Activated CD8-positive, alpha-beta T cell treated with anti-CD3 and anti-CD28 coated beads, Interleukin-2, amount 10 ng/mL, durations not matched to agents 7 days and 5 days (primary cell): ENCODE measurements at regions of chr1 and their contacts with region 1.

Region 1: GRCh38 chr1:149927503-149928387 is at the start of gene SF3B4:
- DNase-seq: peak; percentile 98
- ATAC-seq: peak; percentile 97
- H3K4me3 Mint-ChIP-seq: peak within 1 kb of the TSS; percentile 96
- H3K27ac Mint-ChIP-seq: peak within 1 kb of the TSS; percentile 93
- H3K4me1 Mint-ChIP-seq: peaks cover 57% of the 10 kb centered on the region
- H3K27me3 Mint-ChIP-seq: no peaks in the 10 kb centered on the region
- total RNA-seq, gene SF3B4: 102 to 106 TPM

Region 2: DNA sequence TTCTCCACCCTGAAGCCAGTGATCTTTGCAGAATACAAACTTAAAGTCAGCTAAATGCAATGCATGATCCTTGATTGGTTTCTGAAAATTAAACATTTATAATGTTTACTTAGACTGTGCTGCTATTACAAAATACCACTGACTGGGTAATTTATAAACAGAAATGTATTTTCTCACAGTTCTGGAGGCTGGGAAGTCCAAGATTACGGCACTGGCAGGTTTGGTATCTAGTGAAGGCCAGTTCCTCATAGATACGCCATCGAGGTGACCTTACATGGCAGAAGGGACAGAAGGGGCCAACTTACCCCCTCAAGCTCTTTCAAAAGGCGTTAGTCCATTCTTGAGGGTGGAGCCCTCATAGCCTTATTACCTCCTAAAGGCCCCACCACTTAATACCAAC is 31.2 kb before region 1 on chr1:
- CTCF ChIA-PET with region 1: no interaction called
- POLR2A ChIA-PET with region 1: no interaction called
- DNase-seq: no peak
- ATAC-seq: no peak
- H3K4me3 Mint-ChIP-seq: no peak overlapping the region
- H3K27ac Mint-ChIP-seq: no peak overlapping the region
- H3K4me1 Mint-ChIP-seq: peaks cover 29% of the 10 kb centered on the region
- H3K27me3 Mint-ChIP-seq: no peaks in the 10 kb centered on the region

Region 3: GRCh38 chr1:149942207-149942606 is 14.5 kb after region 1 on chr1:
- CTCF ChIA-PET with region 1: interaction called, 4 read pairs
- POLR2A ChIA-PET with region 1: interaction called, 23 read pairs
- DNase-seq: no peak
- ATAC-seq: no peak
- H3K4me3 Mint-ChIP-seq: no peak overlapping the region
- H3K27ac Mint-ChIP-seq: no peak overlapping the region
- H3K4me1 Mint-ChIP-seq: peaks cover 38% of the 10 kb centered on the region
- H3K27me3 Mint-ChIP-seq: no peaks in the 10 kb centered on the region

Region 4: DNA sequence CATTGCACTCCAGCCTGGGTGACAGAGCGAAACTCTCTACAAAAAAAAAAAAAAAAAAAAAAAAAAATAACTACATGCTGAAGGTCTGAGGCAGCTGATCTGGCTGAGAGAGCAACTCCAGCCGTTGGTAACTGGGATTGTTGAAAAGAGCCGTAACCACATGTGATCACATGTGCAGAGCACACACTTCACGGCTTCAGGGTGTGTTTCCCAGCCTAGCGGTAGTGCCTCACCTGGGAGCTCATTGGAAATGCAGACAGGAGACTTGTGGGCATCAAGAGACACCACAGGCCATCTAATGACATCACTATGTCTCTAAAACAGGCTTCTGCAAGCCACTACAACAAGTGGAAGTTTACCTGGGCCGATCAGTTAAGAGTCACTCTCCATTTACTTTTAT is 94.6 kb after region 1 on chr1:
- CTCF ChIA-PET with region 1: no interaction called
- POLR2A ChIA-PET with region 1: no interaction called
- DNase-seq: no peak
- ATAC-seq: no peak
- H3K4me3 Mint-ChIP-seq: no peak overlapping the region
- H3K27ac Mint-ChIP-seq: no peak overlapping the region
- H3K4me1 Mint-ChIP-seq: no peaks in the 10 kb centered on the region
- H3K27me3 Mint-ChIP-seq: peaks cover 15% of the 10 kb centered on the region

Region 5: DNA sequence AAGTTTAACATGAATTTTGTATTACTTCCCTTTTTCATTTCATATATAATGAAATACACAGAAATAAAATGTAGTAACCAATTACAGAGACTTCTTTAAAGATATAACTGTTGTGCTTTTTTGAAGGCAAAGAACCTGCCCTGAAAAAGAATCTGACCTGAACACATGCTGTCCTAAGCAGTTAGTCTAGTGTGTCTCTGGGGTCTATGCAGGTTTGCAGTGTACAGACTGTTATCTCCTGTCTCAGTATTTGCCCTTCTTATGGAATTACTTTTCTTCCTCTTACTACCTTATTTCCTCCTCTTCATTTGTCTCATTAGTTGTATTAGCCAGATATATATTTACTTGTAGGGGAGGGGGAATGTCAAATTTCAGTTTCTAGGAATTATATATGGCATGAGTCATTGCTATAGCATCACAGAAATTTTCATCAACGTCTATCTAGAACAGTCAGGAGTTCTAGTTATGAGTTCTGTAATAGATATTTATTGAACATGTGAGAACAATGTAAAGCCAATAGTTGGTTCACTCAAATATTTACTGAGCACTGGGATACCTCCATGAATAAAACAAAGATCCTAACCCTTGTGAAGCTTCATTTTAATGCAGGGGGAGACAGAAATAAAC is 193.6 kb after region 1 on chr1:
- CTCF ChIA-PET with region 1: no interaction called
- POLR2A ChIA-PET with region 1: no interaction called
- DNase-seq: no peak
- ATAC-seq: no peak
- H3K4me3 Mint-ChIP-seq: no peak overlapping the region
- H3K27ac Mint-ChIP-seq: no peak overlapping the region
- H3K4me1 Mint-ChIP-seq: no peaks in the 10 kb centered on the region
- H3K27me3 Mint-ChIP-seq: no peaks in the 10 kb centered on the region